Activated CD8-positive, alpha-beta T cell treated with anti-CD3 and anti-CD28 coated beads for 36 hours (primary cell): ENCODE measurements at regions of chr22 and their contacts with region 1.

Region 1: GRCh38 chr22:19679522-19680101 is 34.7 kb upstream of the SEPTIN5 start:
- DNase-seq: peak; percentile 52
- ATAC-seq: peak; percentile 60
- H3K4me3 Mint-ChIP-seq: no peak overlapping the region
- H3K27ac Mint-ChIP-seq: no peak overlapping the region
- H3K4me1 Mint-ChIP-seq: no peaks in the 10 kb centered on the region
- H3K27me3 Mint-ChIP-seq: peaks cover 25% of the 10 kb centered on the region
- CTCF ChIP-seq: peak; percentile 98

Region 2: GRCh38 chr22:19691721-19692341 is 12.2 kb after region 1 on chr22:
- CTCF ChIA-PET with region 1: interaction called, 12 read pairs
- POLR2A ChIA-PET with region 1: interaction called, 3 read pairs
- intact Hi-C with region 1: no loop called
- DNase-seq: no peak
- ATAC-seq: no peak
- H3K4me3 Mint-ChIP-seq: no peak overlapping the region
- H3K27ac Mint-ChIP-seq: no peak overlapping the region
- H3K4me1 Mint-ChIP-seq: no peaks in the 10 kb centered on the region
- H3K27me3 Mint-ChIP-seq: peaks cover 4% of the 10 kb centered on the region
- CTCF ChIP-seq: no peak

Region 3: DNA sequence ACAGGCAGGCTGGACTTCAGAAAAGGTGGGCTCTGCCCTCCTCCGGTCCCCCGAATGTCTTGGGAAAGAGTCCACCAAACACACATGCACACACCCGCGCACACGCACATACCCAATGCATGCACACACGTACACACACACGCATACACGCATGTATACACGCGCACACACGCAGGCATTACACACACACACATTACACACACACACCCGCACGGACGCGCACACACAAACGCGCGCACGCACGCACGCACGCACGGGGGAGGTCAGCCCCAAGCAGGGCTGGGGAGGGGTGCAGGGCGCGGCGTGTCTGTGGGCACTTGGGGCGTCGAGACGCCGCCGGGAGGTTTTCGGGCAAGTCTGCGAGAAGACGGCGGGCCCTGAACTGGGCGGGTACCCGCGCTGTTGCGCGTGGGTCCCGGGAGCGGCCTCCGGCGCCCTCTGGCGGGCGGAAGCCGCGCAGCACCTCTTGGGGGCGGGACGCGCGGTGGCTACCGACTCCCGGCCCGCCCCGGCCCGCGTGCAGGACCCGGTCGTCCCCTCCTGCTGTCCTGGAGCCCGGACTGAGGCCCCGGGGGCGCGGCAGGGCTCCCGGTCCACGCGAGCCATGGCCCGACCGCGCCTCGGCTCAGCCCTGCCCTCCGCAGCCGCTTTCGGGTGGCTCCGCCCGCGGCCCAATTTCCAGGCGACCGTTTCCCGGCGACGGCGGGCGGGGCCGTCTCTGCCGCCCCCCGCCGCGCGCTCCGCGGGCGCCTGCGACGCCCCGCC is 38.3 kb after region 1 on chr22:
- CTCF ChIA-PET with region 1: interaction called, 10 read pairs
- POLR2A ChIA-PET with region 1: no interaction called
- intact Hi-C with region 1: no loop called
- DNase-seq: peak; percentile 79
- ATAC-seq: peak; percentile 93
- H3K4me3 Mint-ChIP-seq: peak overlapping the region; percentile 69
- H3K27ac Mint-ChIP-seq: no peak overlapping the region
- H3K4me1 Mint-ChIP-seq: peaks cover 6% of the 10 kb centered on the region
- H3K27me3 Mint-ChIP-seq: peaks cover 28% of the 10 kb centered on the region
- CTCF ChIP-seq: peak; percentile 97